ENCODE measurements at regions of chr2 and their contacts with region 1.

Region 1: DNA sequence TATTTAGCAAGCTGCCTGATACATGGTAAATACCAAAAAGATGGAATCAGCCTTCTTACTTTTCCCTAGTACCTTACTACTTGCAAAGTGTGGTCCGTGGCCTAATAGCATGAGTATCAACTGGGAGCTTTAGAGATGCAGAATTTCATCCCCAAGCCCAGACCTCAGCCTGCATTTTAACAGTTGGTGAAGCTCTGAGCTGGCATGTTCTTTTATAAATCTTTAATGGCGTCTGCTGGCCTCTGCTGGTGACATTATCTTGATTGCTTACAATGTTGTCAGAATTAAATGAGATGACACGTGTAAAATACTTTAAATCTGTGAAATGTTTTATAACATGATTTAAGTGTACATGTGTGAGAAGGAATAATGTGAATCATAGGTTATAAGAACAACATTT is 115.1 kb upstream of the NOSTRIN start:
- DNase-seq: peak; percentile 47
- ATAC-seq: no peak
- H3K4me3 ChIP-seq: no peak overlapping the region
- H3K4me3 Mint-ChIP-seq: no peak overlapping the region
- H3K27ac ChIP-seq: no peak overlapping the region
- H3K27ac Mint-ChIP-seq: no peak overlapping the region
- H3K4me1 ChIP-seq: no peaks in the 10 kb centered on the region
- H3K4me1 Mint-ChIP-seq: no peaks in the 10 kb centered on the region
- H3K27me3 ChIP-seq: no peaks in the 10 kb centered on the region
- H3K27me3 Mint-ChIP-seq: no peaks in the 10 kb centered on the region
- CTCF ChIP-seq: peak; percentile 45

Region 2: GRCh38 chr2:168443818-168444217 is 243.5 kb before region 1 on chr2:
- CTCF ChIA-PET with region 1: interaction called, 3 read pairs
- POLR2A ChIA-PET with region 1: no interaction called
- intact Hi-C with region 1: loop called (anchors 10 kb)
- DNase-seq: no peak
- ATAC-seq: no peak
- H3K4me3 ChIP-seq: no peak overlapping the region
- H3K4me3 Mint-ChIP-seq: no peak overlapping the region
- H3K27ac ChIP-seq: no peak overlapping the region
- H3K27ac Mint-ChIP-seq: no peak overlapping the region
- H3K4me1 ChIP-seq: no peaks in the 10 kb centered on the region
- H3K4me1 Mint-ChIP-seq: no peaks in the 10 kb centered on the region
- H3K27me3 ChIP-seq: no peaks in the 10 kb centered on the region
- H3K27me3 Mint-ChIP-seq: peaks cover 6% of the 10 kb centered on the region
- CTCF ChIP-seq: no peak